ENCODE measurements at regions of chr13 and their contacts with region 1.

Region 1: GRCh38 chr13:24220086-24220703 is 59.7 kb downstream of the SPATA13 start:
- DNase-seq: peak; percentile 81
- H3K4me3 ChIP-seq: no peak overlapping the region
- H3K27ac ChIP-seq: no peak overlapping the region
- H3K4me1 ChIP-seq: peaks cover 31% of the 10 kb centered on the region
- CTCF ChIP-seq: peak; percentile 91

Region 2: DNA sequence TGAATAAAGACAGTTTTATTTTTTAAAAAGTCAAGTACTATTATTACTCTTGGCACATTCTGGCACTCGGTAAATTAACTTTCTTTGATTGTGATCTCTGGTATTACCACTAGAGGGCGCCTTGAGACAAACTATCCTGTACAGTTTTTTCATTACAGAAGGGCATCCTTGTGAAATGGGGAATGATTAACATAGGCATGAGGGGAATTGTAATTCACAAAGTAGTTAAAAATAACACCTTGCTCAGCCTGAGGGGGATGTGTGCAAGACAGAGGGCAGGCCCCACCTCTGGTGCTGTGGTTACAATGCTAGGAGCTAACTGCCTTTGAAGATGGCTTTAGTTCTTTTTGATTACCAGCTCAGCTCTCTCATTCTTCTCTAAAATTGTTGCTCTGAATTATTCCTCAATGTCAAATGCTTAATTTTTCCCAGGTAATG is 298.7 kb before region 1 on chr13:
- CTCF ChIA-PET with region 1: no interaction called
- POLR2A ChIA-PET with region 1: no interaction called
- intact Hi-C with region 1: loop called (anchors 10 kb)
- DNase-seq: peak; percentile 5
- H3K4me3 ChIP-seq: no peak overlapping the region
- H3K27ac ChIP-seq: no peak overlapping the region
- H3K4me1 ChIP-seq: no peaks in the 10 kb centered on the region
- CTCF ChIP-seq: peak; percentile 91

Region 3: DNA sequence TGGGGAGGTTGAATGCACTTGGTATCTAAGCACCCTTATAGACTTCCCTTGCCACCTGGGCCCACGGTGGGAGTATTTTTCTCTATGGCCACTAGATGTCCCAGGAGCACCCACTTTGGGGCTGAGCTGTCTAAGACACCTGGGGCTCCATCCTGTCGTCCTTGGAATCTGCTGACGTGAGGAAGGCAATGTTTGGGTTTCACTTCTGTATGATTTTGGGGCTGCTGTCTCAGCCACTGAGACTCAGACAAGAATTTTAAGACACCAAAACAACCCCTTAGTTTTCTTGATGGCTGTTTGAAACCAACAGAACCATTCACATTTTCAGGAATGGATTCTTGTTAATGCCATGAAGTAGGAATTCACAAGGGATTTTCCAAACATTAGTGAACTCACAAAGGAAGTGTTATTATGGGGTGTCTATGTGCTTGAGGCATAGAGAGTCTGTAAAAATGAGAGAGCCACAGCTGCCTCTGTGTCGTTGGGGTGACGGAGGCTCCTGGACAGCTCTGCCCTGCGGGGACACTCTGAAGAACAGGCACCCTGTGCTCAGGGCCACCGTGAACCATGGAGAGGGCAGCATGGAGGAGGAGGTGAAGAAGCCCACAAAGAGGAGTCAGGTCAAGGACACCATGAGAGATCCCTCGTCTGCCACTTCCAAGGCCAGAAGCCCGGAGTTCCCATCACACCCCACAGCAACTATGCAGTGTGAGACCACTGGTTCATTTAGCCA is 166.5 kb before region 1 on chr13:
- CTCF ChIA-PET with region 1: interaction called, 3 read pairs
- POLR2A ChIA-PET with region 1: interaction called, 3 read pairs
- intact Hi-C with region 1: loop called (anchors 1 kb)
- DNase-seq: peak; percentile 78
- H3K4me3 ChIP-seq: no peak overlapping the region
- H3K27ac ChIP-seq: no peak overlapping the region
- H3K4me1 ChIP-seq: peaks cover 3% of the 10 kb centered on the region
- CTCF ChIP-seq: peak; percentile 91

Region 4: DNA sequence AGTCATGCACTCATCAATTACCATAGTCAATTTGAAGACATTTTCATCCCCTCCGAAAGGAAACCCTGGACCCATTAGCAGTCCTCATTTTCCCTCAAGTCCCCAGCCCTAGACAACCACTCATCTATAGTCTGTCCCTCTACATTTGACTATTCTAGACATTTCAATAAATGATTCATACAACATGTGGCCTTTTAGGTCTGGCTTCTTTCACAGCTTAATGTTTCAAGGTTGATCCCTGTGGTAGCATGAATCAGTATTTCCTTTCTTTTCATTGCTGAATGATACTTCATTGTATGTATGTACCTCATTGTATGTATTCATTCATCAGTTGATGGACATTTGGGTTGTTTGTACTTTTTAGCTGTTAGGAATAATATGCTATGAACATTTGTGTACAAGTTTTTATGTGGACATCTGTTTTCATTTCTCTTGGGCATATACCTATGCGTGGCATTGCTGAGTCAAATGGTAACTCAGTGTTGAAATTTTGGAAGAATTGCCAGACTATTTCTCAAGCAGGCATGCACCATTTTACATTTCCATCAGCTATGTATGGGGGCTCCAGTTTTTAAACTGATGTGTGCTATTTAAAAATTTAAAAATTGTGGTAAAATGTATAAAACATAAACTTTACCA is 41.2 kb before region 1 on chr13:
- CTCF ChIA-PET with region 1: no interaction called
- POLR2A ChIA-PET with region 1: interaction called, 10 read pairs
- intact Hi-C with region 1: no loop called
- DNase-seq: no peak
- H3K4me3 ChIP-seq: no peak overlapping the region
- H3K27ac ChIP-seq: no peak overlapping the region
- H3K4me1 ChIP-seq: peaks cover 3% of the 10 kb centered on the region
- CTCF ChIP-seq: no peak

Region 5: DNA sequence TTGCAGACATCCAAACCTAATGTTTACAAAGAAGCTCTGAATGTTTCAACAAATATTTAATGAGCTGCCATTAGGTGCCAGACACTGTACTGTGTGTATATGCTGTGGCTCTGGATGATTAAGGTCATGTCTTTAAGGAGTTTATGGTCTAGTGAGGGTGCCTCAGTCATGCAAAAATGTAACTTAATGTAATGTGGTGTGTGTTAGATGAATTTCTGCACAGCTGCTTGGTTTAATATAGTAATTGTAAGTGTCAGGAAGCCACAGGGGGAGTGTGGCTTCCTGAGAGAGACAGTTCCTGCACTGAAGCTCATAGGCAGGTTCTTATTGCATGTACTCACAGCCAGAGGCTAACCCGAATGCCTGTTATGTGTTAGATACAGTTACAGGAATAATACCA is 16.4 kb before region 1 on chr13:
- CTCF ChIA-PET with region 1: interaction called, 4 read pairs
- POLR2A ChIA-PET with region 1: interaction called, 116 read pairs
- intact Hi-C with region 1: loop called (anchors 1 kb)
- DNase-seq: peak; percentile 73
- H3K4me3 ChIP-seq: peak overlapping the region; percentile 54
- H3K27ac ChIP-seq: peak overlapping the region; percentile 65
- H3K4me1 ChIP-seq: peaks cover 31% of the 10 kb centered on the region
- CTCF ChIP-seq: no peak

Region 6: GRCh38 chr13:24784319-24784718 is 564.1 kb after region 1 on chr13:
- CTCF ChIA-PET with region 1: no interaction called
- POLR2A ChIA-PET with region 1: no interaction called
- intact Hi-C with region 1: no loop called
- DNase-seq: no peak
- H3K4me3 ChIP-seq: no peak overlapping the region
- H3K27ac ChIP-seq: no peak overlapping the region
- H3K4me1 ChIP-seq: no peaks in the 10 kb centered on the region
- CTCF ChIP-seq: no peak